Aorta (tissue), 5 donors: ENCODE measurements at regions of chr18 and their contacts with region 1.

Region 1: GRCh38 chr18:79246348-79247108 is 149.2 kb upstream of the NFATC1 start:
- DNase-seq: peak; percentile 74 to 89
- ATAC-seq: peak; percentile 91
- H3K4me3 ChIP-seq: no peak overlapping the region
- H3K27ac ChIP-seq: no peak overlapping the region
- H3K4me1 ChIP-seq: no peaks in the 10 kb centered on the region
- H3K27me3 ChIP-seq: no peaks in the 10 kb centered on the region

Region 2: DNA sequence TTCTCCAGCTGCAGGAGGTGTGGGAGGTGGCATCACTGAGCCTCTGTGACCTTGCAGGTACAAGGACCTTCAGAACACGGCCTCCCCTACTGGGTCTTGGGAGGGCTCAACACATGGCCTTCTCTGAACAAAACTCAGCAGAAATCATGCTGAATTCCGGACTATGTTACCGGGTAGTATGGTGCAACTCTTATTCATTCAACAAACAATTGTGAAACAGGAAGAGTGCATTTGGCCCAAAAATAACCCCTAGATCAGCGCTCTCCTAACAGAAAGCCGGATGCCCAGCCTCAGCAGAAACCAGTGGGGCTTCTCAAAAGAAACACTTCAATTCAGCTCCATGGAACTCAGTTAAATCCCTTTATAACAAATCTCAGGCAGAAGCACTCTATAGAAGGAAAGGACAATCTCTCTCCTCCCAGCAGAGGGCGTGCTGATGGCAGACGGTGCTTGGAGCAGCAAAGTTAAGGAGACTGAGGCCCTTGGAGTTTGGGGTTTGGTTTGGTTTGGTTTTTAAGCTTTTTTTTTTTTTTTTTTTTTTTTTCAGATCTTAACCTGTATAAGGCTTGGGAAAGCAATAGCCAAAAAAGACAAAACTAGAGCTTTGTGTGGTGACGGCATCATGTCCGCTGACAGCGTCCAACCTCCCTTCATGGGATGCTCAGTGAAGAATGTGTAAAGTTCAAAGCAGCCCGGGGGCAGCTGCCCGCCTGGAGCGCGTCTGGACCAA is 371.1 kb before region 1 on chr18:
- intact Hi-C with region 1: loop called in 1 of 2 experiments (anchors 10 kb)
- DNase-seq: no peak
- ATAC-seq: no peak
- H3K4me3 ChIP-seq: no peak overlapping the region
- H3K27ac ChIP-seq: no peak overlapping the region
- H3K4me1 ChIP-seq: no peaks in the 10 kb centered on the region
- H3K27me3 ChIP-seq: no peaks in the 10 kb centered on the region

Region 3: DNA sequence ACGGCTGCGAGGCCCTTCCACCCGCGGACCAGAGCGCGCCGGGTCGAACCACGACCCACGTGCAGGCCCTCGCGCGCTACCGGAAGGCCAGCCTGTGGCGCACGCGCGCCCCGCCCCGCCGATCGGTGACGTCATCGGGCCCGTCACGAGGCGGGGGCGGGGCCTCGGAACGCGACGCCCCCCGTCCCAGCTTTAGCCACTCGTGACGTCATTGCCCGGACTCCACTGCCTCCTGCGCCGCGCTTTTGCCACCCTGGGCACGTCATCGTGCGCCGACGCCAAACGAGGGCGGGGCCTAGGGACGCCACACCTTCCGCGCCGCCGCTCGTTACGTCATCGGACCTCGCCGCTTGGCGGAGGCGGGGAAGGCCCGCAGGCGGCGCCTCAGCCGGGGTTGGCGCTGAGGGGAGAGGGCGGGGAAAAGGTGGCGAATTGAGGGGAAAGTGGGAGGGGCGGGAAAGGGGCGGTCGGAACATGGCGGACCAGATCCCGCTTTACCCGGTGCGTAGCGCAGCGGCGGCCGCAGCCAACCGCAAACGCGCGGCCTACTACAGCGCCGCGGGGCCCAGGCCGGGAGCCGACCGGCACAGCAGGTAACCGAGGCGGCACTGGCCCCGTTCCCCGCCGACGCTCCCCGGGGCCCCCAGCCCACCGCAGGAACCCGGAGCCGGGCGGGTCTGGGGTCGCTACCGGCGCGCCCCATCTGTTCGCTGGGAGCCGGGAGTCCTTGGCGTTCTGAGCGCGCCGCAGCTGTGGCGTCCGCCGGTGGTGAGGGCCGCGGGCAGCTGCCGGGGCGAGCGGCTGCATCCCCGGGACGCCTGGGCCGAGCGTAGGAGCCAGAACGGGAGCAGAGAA is 177.4 kb before region 1 on chr18 and contains the start of gene ATP9B:
- intact Hi-C with region 1: loop called (anchors 5 to 10 kb)
- DNase-seq: peak; percentile 97 to 99
- ATAC-seq: peak; percentile 100
- H3K4me3 ChIP-seq: peak within 1 kb of the TSS; percentile 95 to 98
- H3K27ac ChIP-seq: peak within 1 kb of the TSS; percentile 96 to 98
- H3K4me1 ChIP-seq: no peaks in the 10 kb centered on the region
- H3K27me3 ChIP-seq: no peaks in the 10 kb centered on the region
- total RNA-seq, gene ATP9B: 41.0 to 55.3 TPM

Region 4: DNA sequence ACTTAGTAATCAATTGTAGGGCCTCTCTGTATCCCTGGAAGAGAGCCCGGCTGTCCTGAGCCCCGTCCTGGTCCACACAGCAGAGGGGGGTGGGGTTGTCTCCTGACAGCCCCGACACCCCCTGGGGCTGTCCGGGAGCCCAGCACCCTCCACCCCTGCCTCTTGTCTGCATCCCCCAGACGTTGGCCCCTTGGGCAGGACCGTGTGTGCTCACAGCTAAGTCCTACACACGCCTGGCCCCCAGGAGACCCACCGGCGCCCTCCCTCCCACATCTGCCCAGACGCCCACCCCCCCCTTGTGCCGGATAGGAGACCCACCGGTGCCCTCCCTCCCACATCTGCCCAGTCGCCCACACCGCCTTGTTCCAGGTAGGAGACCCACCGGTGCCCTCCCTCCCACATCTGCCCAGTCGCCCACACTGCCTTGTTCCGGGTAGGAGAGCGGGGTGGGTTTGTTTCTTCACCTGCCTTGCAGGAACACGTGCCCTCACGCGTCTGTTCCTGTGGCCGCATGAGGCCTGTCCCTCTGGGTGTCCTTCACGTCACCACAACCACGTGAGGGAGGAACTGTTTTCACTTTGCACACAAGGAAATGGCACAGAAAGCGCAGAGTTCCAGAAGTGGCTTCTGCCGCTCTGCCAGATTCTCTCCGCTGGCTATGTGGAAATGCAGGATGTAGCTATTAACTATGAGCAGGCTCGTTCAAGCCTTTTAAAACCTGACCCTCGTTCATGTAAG is 88.1 kb after region 1 on chr18:
- intact Hi-C with region 1: no loop called
- DNase-seq: no peak
- ATAC-seq: peak; percentile 36
- H3K4me3 ChIP-seq: no peak overlapping the region
- H3K27ac ChIP-seq: no peak overlapping the region
- H3K4me1 ChIP-seq: no peaks in the 10 kb centered on the region
- H3K27me3 ChIP-seq: no peaks in the 10 kb centered on the region